Activated T-helper 2 cell treated with anti-CD3 and anti-CD28 coated beads, Interferon-gamma antibody, Interleukin-2, Interleukin-4, amounts not matched to agents 10 μg/mL and 5 μg/mL and 100 μg/mL, durations not matched to agents 14 hours and 24 hours and 36 hours (primary cell): ENCODE measurements at regions of chr15 and their contacts with region 1.

Region 1: DNA sequence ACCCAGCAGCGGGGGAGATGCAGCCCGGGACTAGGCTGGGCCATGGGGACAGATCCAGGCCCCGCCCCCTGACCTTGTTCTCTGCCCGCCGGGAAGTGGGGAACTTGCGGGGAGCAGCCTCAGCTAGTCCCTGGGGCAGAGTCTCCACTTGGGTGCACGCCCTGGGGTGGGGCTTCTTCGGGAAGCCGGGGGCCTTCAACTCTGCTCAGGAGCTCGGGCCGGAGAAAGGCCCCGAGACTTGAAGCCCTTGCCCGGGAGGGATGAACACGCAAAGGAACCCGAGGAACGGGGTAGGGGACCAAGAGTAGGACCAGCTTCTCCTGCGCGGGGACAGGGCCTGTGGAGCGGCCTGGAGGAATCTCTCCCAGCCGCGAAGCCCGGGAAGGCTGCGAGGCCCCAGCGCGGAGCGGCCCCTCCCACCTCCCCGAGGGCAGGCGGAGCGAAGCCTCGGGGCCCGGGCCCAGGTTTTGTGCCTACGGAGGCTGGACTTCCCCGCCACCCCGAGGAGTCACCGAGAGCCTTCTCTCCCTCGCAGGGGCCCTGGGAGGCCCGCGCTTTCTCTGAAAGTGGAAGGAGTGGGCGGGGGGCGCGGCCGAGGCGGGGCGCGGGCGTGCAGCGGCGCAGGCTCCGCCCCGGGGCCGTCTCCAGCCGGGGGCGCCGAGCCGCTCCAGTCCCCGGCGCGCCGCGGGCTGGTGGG is at the start of gene ITPKA:
- DNase-seq: peak; percentile 74
- H3K4me3 Mint-ChIP-seq: peak within 1 kb of the TSS; percentile 80
- H3K27ac Mint-ChIP-seq: peak within 1 kb of the TSS; percentile 63
- H3K4me1 Mint-ChIP-seq: peaks cover 32% of the 10 kb centered on the region
- H3K27me3 Mint-ChIP-seq: peaks cover 21% of the 10 kb centered on the region
- total RNA-seq, gene ITPKA: 4.7 and 5.7 TPM in 2 replicates

Region 2: DNA sequence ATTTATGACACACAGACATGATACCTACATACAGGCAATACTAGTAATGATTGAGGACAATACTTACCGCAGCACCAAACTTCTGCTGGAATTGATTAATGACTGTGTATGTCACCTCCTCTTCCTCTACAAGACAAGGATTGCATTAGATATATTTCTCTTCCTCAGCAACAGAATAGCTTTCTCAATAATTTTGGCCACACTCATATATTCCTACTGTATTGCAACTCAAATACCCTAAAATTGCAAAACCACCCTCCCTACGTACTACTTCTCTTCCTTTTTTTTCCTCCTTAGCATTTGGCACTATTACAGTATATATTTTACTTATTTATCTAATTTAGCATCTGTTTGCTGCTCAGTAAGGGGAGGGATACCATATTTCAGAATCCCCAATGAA is 277.6 kb before region 1 on chr15:
- intact Hi-C with region 1: no loop called
- DNase-seq: no peak
- H3K4me3 Mint-ChIP-seq: no peak overlapping the region
- H3K27ac Mint-ChIP-seq: no peak overlapping the region
- H3K4me1 Mint-ChIP-seq: no peaks in the 10 kb centered on the region
- H3K27me3 Mint-ChIP-seq: peaks cover 29% of the 10 kb centered on the region

Region 3: GRCh38 chr15:41512940-41513510 is 19.7 kb after region 1 on chr15:
- intact Hi-C with region 1: loop called (anchors 2 kb)
- DNase-seq: no peak
- H3K4me3 Mint-ChIP-seq: peak overlapping the region; percentile 62
- H3K27ac Mint-ChIP-seq: no peak overlapping the region
- H3K4me1 Mint-ChIP-seq: peaks cover 24% of the 10 kb centered on the region
- H3K27me3 Mint-ChIP-seq: peaks cover 35% of the 10 kb centered on the region

Region 4: GRCh38 chr15:41660235-41661077 is 167.1 kb after region 1 on chr15 and contains the start of gene MGA:
- intact Hi-C with region 1: loop called (anchors 5 kb)
- DNase-seq: peak; percentile 88
- H3K4me3 Mint-ChIP-seq: peak within 1 kb of the TSS; percentile 88
- H3K27ac Mint-ChIP-seq: peak within 1 kb of the TSS; percentile 87
- H3K4me1 Mint-ChIP-seq: peaks cover 32% of the 10 kb centered on the region
- H3K27me3 Mint-ChIP-seq: peaks cover 25% of the 10 kb centered on the region
- total RNA-seq, gene MGA: 37.7 and 38.2 TPM in 2 replicates

Region 5: DNA sequence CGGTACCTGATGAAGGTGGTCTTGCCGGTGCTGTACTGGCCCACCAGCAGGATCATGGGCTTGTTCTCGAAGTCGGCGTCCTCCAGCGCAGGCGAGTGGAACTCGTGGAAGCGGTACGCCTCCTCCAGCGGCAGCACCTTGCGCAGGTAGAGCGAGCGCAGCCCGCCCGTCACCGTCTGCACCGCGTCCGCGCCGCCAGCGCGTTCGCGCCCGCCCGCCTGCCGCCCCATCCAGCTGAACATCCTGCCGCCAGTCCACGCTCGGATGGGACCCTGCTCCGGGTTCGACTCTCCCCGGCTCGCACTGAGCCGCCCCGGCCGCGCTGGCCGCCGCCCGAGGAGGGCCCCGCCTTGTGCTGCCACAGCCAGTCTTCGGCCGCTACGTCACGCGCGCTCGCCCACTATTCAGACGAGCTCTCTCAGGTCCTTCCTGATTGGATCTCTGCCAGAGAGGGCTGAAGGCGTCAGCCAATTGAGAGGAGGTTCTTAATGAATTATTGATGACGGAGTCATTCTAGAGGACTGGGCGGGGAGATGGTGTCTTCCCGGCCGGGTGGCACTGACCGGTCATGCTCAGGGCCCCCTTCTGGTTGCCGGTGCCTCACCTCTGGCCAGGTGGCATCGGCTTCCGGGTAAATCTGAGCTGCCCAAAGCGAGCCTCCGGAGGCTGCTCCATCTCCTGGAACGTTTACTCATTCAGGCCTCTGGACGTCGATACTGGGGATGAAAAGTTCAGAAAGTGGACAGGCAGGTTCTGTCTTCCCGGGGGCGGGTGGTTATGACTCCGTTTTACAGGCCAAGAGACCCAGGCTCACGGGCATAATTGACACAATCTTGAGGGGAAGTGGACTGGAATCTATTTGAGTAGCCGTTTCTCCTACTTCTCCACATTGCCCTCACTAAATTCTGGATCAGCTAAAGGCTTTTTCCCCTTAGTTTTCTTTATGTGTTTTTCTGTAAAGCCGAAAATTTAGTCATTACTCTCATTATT is 479.2 kb after region 1 on chr15 and contains the start of gene EHD4:
- intact Hi-C with region 1: loop called (anchors 2 kb)
- DNase-seq: peak; percentile 94
- H3K4me3 Mint-ChIP-seq: peak within 1 kb of the TSS; percentile 83
- H3K27ac Mint-ChIP-seq: peak within 1 kb of the TSS; percentile 87
- H3K4me1 Mint-ChIP-seq: peaks cover 50% of the 10 kb centered on the region
- H3K27me3 Mint-ChIP-seq: peaks cover 12% of the 10 kb centered on the region
- total RNA-seq, gene EHD4: 22.3 and 22.7 TPM in 2 replicates

Region 6: DNA sequence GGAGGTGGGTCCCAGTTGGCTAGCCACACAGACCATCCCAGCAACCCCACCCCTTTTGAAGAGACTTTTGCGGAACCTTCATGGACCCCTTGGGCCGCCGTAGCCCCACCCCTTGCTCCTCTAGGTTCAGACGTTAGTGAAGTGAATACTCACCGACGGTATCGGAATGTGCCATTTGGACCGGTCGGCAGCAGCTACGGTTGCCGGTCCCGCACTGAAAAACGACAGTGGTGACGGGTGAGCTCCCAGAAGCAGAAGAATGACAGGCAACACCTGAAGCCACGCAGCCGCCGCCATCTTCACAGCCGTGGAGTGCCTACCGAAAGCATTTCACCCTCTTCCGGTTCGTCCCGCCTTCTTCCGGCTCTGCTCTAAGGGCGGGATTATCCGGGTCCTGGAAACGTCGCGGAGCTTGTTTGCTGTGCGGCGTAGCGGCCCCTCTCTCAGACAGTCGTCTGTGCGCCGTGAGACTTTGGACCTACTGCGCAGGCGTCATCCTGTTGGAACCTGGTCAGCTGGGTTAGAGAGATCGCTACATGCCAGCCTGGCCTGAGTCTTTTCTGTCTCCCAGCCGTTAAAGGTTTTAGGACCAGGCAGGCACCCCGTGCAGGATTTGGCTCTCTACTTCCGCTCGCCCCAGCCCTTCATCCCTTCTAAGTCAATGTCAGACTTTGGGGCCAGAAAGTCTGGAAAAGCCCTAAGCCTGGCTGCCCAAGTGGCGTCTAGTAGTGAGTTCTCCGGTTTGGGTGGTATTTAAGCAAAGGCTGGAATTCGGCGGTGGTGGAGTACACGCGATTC is 779.9 kb after region 1 on chr15 and contains the starts of genes GANC and TMEM87A:
- intact Hi-C with region 1: loop called (anchors 5 kb)
- DNase-seq: peak; percentile 96
- H3K4me3 Mint-ChIP-seq: peak within 1 kb of the TSS; percentile 98
- H3K27ac Mint-ChIP-seq: peak within 1 kb of the TSS; percentile 100
- H3K4me1 Mint-ChIP-seq: peaks cover 34% of the 10 kb centered on the region
- H3K27me3 Mint-ChIP-seq: no peaks in the 10 kb centered on the region
- total RNA-seq, gene GANC: 19.5 and 22.4 TPM in 2 replicates
- total RNA-seq, gene TMEM87A: 34.1 and 34.8 TPM in 2 replicates